CD4-positive, alpha-beta memory T cell (primary cell): ENCODE measurements at regions of chr6 and their contacts with region 1.

Region 1: DNA sequence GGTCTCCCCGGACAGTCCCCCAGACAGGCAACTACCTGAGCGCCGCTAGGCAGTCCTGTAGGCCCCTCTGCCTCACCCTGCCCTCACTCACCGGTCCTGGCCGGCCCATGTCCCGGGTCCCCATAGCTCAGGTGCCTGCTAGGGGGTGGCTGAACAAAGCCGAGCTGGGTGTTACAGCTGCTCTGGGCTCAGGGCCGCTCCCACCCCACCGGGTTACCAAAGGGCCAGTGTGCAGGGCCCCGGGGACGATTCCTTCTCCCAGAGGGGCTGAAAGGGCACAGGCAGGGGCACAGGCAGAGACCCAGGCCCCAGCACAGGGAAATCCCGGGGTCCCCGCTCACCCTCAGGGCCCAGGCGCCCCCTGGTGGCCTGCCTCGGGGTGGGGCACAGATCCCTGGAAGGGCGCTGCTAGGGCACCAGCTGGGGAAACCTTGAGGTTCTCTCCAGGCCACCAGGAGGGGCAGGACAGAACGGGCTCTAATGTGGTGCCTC is 118.4 kb downstream of the GRM4 start:
- DNase-seq: peak in 4 of 5 donors; percentile 54 to 67 (median 63)
- H3K4me3 ChIP-seq: no peak overlapping the region
- H3K4me3 Mint-ChIP-seq: no peak overlapping the region
- H3K27ac ChIP-seq: no peak overlapping the region
- H3K27ac Mint-ChIP-seq: no peak overlapping the region
- H3K4me1 ChIP-seq: no peaks in the 10 kb centered on the region
- H3K4me1 Mint-ChIP-seq: peaks cover 0 to 4% (median 0%) of the 10 kb centered on the region in 4 donors
- H3K27me3 ChIP-seq: no peaks in the 10 kb centered on the region
- H3K27me3 Mint-ChIP-seq: peaks cover 0 to 5% of the 10 kb centered on the region in 2 donors

Region 2: GRCh38 chr6:33744001-33744848 is 283.3 kb before region 1 on chr6:
- CTCF ChIA-PET with region 1: interaction called, 42 read pairs
- POLR2A ChIA-PET with region 1: no interaction called
- intact Hi-C with region 1: loop called (anchors 1 kb)
- DNase-seq: peak; percentile 57 to 68 (median 66)
- H3K4me3 ChIP-seq: no peak overlapping the region
- H3K4me3 Mint-ChIP-seq: no peak overlapping the region
- H3K27ac ChIP-seq: no peak overlapping the region
- H3K27ac Mint-ChIP-seq: no peak overlapping the region
- H3K4me1 ChIP-seq: no peaks in the 10 kb centered on the region
- H3K4me1 Mint-ChIP-seq: peaks cover 0 to 4% (median 3%) of the 10 kb centered on the region in 4 donors
- H3K27me3 ChIP-seq: peaks cover 7% of the 10 kb centered on the region
- H3K27me3 Mint-ChIP-seq: peaks cover 0 to 7% of the 10 kb centered on the region in 2 donors

Region 3: DNA sequence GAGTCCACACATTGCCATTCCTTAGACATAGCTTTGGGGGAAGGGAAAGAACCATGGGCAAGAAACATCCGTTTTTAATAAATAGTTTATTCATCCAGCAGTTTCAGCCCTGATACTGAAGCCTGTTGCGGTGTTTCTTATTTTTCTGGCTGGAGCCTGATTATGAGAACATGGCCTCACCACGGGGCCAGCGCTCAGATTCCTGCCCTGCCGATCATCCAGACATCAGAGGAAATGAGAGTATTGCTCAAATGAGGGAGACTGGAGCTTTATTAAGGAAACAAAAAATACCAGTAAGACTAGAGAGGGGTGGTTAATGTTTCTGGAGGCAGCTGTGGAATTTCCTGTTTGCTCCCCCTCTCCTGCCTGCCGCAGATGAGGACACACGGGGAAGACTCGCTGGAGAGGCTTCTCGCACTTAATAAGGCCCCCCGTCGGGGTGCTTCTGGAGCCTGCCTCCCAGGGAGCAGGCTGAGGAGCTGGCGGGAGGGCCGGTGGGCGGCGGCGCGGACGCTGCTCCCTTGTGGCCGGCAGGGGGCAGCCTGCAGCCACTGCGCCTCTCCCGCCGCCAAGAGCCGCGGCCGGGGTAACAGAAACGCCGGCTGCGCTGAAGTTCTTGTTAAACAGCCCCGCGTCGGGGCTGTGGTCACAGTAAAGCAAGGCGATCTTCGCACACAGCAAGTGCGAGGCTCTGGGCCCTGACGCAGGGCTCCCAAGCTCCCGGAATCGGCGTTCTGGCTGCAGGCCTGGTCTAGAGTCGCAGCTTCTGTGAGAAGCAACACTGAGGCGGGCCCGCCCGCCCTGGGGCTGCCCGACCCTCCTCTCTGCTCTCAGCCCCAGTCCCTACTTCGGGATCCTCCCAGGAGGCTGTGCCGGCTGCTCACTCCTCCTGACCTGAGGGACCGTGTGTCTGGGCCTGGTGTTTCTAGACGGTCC is 256.1 kb before region 1 on chr6:
- CTCF ChIA-PET with region 1: interaction called, 225 read pairs
- POLR2A ChIA-PET with region 1: interaction called, 11 read pairs
- intact Hi-C with region 1: no loop called
- DNase-seq: peak; percentile 54 to 68 (median 60)
- H3K4me3 ChIP-seq: no peak overlapping the region
- H3K4me3 Mint-ChIP-seq: peak overlapping the region in 1 of 8 donors; percentile 29
- H3K27ac ChIP-seq: no peak overlapping the region
- H3K27ac Mint-ChIP-seq: peak overlapping the region in 6 of 7 donors; percentile 21 to 88 (median 50)
- H3K4me1 ChIP-seq: peaks cover 6% of the 10 kb centered on the region
- H3K4me1 Mint-ChIP-seq: peaks cover 10 to 15% (median 13%) of the 10 kb centered on the region in 4 donors
- H3K27me3 ChIP-seq: no peaks in the 10 kb centered on the region
- H3K27me3 Mint-ChIP-seq: no peaks in the 10 kb centered on the region

Region 4: GRCh38 chr6:33851959-33852358 is 175.5 kb before region 1 on chr6:
- CTCF ChIA-PET with region 1: interaction called, 58 read pairs
- POLR2A ChIA-PET with region 1: no interaction called
- intact Hi-C with region 1: loop called (anchors 1 kb)
- DNase-seq: peak in 4 of 5 donors; percentile 17 to 24 (median 20)
- H3K4me3 ChIP-seq: no peak overlapping the region
- H3K4me3 Mint-ChIP-seq: no peak overlapping the region
- H3K27ac ChIP-seq: no peak overlapping the region
- H3K27ac Mint-ChIP-seq: no peak overlapping the region
- H3K4me1 ChIP-seq: peaks cover 18% of the 10 kb centered on the region
- H3K4me1 Mint-ChIP-seq: peaks cover 13 to 26% (median 16%) of the 10 kb centered on the region in 4 donors
- H3K27me3 ChIP-seq: peaks cover 9% of the 10 kb centered on the region
- H3K27me3 Mint-ChIP-seq: peaks cover 0 to 5% of the 10 kb centered on the region in 2 donors